HCT116 (cell line): ENCODE measurements at regions of chr11 and their contacts with region 1.

Region 1: GRCh38 chr11:44159848-44160721 is 64.6 kb downstream of the EXT2 start:
- DNase-seq: no peak
- ATAC-seq: no peak
- H3K4me3 ChIP-seq: no peak overlapping the region
- H3K27ac ChIP-seq: no peak overlapping the region
- H3K4me1 ChIP-seq: no peaks in the 10 kb centered on the region
- H3K27me3 ChIP-seq: no peaks in the 10 kb centered on the region
- CTCF ChIP-seq: no peak
- POLR2A ChIP-seq: no peak
- RAD21 ChIP-seq: no peak

Region 2: GRCh38 chr11:43987384-43988039 is 172.6 kb before region 1 on chr11:
- CTCF ChIA-PET with region 1: no interaction called
- POLR2A ChIA-PET with region 1: no interaction called
- RAD21 ChIA-PET with region 1: no interaction called
- intact Hi-C with region 1: no loop called
- DNase-seq: no peak
- ATAC-seq: no peak
- H3K4me3 ChIP-seq: no peak overlapping the region
- H3K27ac ChIP-seq: no peak overlapping the region
- H3K4me1 ChIP-seq: peaks cover 0 to 2% of the 10 kb centered on the region in 2 experiments; a peak in 1 of 4 replicates
- H3K27me3 ChIP-seq: no peaks in the 10 kb centered on the region
- CTCF ChIP-seq: no peak
- POLR2A ChIP-seq: no peak
- RAD21 ChIP-seq: no peak

Region 3: DNA sequence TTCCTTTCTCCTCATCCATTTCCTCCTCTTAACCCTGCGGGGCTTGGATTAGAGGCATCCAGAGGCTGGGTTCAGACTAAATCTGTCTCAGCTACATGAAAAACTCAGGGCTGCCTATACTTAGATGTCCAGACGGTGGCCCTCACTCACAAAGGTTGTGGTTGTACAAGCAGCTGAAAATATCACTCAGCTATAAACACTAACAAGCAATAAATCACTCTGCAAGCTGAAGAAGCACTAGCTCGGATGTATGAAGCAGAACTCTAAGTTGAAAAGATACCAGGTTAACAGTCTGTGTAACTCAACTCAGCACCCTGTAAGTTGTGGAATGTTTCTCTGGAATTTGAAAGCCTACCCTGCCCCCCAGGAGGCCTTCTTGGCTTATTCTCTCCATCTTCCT is 18.3 kb after region 1 on chr11:
- CTCF ChIA-PET with region 1: no interaction called
- POLR2A ChIA-PET with region 1: no interaction called
- RAD21 ChIA-PET with region 1: no interaction called
- intact Hi-C with region 1: loop called (anchors 2 kb)
- DNase-seq: no peak
- ATAC-seq: no peak
- H3K4me3 ChIP-seq: no peak overlapping the region
- H3K27ac ChIP-seq: no peak overlapping the region
- H3K4me1 ChIP-seq: no peaks in the 10 kb centered on the region
- H3K27me3 ChIP-seq: no peaks in the 10 kb centered on the region
- CTCF ChIP-seq: no peak
- POLR2A ChIP-seq: no peak
- RAD21 ChIP-seq: no peak

Region 4: DNA sequence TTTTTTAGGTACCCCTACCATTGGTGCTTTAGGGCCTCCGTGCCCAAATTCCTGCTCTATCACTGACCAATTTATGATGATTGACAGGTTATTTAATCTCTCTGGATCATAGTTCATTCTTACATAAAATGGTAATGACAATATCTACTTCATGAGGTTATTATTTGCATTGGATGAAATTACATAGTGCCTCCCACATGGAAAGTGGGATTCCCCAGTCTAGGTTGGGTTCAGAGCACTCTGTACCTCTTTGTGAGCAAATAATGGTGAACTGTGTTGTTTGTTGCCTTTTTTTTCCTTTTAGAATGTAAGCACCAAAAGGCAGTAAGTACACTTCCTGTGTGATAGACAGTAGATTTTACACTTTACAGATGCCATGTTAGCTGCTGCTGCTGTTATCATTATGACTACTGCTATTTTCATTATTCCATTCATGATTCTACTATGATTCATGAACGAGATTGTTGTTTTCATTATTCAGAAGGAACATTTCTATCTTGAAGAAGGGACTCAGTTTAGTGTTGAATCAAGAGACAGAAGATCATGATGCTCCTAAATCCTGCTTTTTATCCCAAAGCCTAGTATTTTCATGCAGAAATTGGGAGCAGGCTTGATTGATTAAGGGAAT is 49.0 kb after region 1 on chr11:
- CTCF ChIA-PET with region 1: no interaction called
- POLR2A ChIA-PET with region 1: no interaction called
- RAD21 ChIA-PET with region 1: no interaction called
- intact Hi-C with region 1: loop called (anchors 10 kb)
- DNase-seq: no peak
- ATAC-seq: no peak
- H3K4me3 ChIP-seq: no peak overlapping the region
- H3K27ac ChIP-seq: no peak overlapping the region
- H3K4me1 ChIP-seq: no peaks in the 10 kb centered on the region
- H3K27me3 ChIP-seq: no peaks in the 10 kb centered on the region
- CTCF ChIP-seq: no peak
- POLR2A ChIP-seq: no peak
- RAD21 ChIP-seq: no peak